CD4-positive, alpha-beta T cell (primary cell): ENCODE measurements at regions of chr12 and their contacts with region 1.

Region 1: DNA sequence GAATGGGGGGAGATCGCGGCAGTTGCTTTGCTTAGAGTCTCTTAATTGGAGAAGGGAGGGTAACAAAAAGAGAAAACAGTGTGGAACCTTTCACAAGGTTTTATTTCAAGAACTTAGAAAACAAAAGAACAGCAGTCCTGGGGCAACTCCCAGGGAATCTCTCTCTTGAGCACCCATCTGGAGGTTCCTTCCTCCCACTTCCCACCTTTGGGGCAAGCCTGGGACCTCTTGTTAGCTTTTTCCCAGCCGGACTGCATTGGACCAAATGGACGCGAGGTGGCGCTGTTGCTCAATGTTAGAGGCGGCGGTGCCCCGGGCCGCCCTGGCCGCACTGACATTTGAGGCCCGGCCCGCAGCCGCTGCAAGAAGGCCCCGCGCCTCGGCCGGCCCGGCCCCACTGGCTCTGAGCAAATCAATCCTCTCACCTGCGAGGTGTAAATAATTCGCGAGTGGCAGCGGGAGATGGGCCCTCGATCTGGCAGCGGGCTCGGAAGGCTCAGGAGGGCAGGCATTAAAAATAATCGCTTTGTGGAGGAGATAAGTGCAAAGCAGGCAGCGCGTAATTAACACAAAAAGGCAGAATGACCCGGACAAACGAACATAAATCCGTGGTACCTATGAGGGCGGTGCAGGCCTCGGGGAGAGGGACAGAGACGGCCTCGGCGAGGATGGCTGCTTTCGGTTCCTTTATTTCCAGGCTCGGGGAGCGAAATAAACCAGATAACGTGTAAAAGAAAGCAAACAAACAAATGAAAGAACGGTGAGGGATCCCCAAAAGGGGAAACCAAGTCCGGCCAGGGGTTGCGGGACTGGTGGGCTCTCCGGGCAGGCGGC is 2.7 kb upstream of the HOXC8 start:
- DNase-seq: peak; percentile 68 to 91 (median 81)
- ATAC-seq: peak; percentile 80
- H3K4me3 ChIP-seq: peak overlapping the region; percentile 50
- H3K4me3 Mint-ChIP-seq: peak overlapping the region; percentile 84
- H3K27ac ChIP-seq: no peak overlapping the region
- H3K27ac Mint-ChIP-seq: no peak overlapping the region
- H3K4me1 ChIP-seq: peaks cover 41% of the 10 kb centered on the region
- H3K4me1 Mint-ChIP-seq: peaks cover 38% of the 10 kb centered on the region
- H3K27me3 ChIP-seq: peaks cover 93 to 96% of the 10 kb centered on the region in 2 experiments
- H3K27me3 Mint-ChIP-seq: peaks cover 100% of the 10 kb centered on the region
- CTCF ChIP-seq: peak; percentile 93

Region 2: DNA sequence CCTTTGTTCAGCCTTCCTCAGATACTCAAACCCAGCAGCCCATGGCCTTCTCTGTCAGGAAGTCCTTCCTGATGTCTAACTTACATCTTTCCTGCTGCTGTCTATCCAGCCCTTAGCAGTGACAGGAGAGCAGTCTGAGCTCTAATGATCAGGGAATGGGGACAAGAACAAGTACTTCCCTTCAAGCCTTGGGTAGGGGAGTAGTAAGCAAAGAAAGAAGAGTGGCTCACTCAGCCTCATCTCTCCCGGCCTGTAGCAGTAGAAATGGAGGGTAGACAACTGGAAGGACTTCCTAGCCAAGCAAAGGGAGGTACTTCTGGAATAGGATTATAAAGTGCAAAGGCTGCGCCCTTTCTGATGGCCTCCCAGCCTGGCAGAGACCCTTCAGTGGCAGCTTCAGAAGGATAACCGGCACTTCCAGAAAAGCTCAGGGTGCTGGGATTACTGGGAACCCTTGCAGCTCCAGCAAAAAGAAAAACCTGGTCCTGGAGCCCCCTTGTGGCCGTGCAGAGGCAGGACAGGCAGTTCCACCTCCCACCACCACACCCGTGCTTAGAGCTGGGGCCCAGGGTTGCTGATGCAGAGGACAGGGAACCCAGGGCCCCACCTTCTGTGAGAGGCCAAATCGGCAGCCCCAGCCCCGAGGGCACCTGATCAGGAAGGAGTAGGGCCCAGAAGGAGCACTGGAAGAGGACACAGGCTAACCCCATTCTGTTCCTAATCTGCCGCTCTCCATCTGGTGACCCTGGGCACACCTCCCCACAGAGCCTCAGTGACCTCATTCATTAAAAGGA is 195.1 kb after region 1 on chr12:
- CTCF ChIA-PET with region 1: interaction called, 59 read pairs
- POLR2A ChIA-PET with region 1: interaction called, 4 read pairs
- intact Hi-C with region 1: loop called (anchors 1 to 2 kb)
- DNase-seq: peak; percentile 46 to 83 (median 57)
- ATAC-seq: peak; percentile 98
- H3K4me3 ChIP-seq: no peak overlapping the region
- H3K4me3 Mint-ChIP-seq: no peak overlapping the region
- H3K27ac ChIP-seq: no peak overlapping the region
- H3K27ac Mint-ChIP-seq: no peak overlapping the region
- H3K4me1 ChIP-seq: peaks cover 5% of the 10 kb centered on the region
- H3K4me1 Mint-ChIP-seq: no peaks in the 10 kb centered on the region
- H3K27me3 ChIP-seq: peaks cover 50 to 61% of the 10 kb centered on the region in 2 experiments
- H3K27me3 Mint-ChIP-seq: peaks cover 89% of the 10 kb centered on the region
- CTCF ChIP-seq: peak; percentile 92

Region 3: GRCh38 chr12:54207484-54208294 is 201.6 kb after region 1 on chr12:
- CTCF ChIA-PET with region 1: interaction called, 59 read pairs
- POLR2A ChIA-PET with region 1: interaction called, 8 read pairs
- intact Hi-C with region 1: loop called (anchors 1 kb)
- DNase-seq: peak; percentile 59 to 84 (median 72)
- ATAC-seq: peak; percentile 96
- H3K4me3 ChIP-seq: no peak overlapping the region
- H3K4me3 Mint-ChIP-seq: no peak overlapping the region
- H3K27ac ChIP-seq: no peak overlapping the region
- H3K27ac Mint-ChIP-seq: no peak overlapping the region
- H3K4me1 ChIP-seq: peaks cover 7% of the 10 kb centered on the region
- H3K4me1 Mint-ChIP-seq: no peaks in the 10 kb centered on the region
- H3K27me3 ChIP-seq: peaks cover 13 to 31% of the 10 kb centered on the region in 2 experiments
- H3K27me3 Mint-ChIP-seq: peaks cover 53% of the 10 kb centered on the region
- CTCF ChIP-seq: peak; percentile 92

Region 4: DNA sequence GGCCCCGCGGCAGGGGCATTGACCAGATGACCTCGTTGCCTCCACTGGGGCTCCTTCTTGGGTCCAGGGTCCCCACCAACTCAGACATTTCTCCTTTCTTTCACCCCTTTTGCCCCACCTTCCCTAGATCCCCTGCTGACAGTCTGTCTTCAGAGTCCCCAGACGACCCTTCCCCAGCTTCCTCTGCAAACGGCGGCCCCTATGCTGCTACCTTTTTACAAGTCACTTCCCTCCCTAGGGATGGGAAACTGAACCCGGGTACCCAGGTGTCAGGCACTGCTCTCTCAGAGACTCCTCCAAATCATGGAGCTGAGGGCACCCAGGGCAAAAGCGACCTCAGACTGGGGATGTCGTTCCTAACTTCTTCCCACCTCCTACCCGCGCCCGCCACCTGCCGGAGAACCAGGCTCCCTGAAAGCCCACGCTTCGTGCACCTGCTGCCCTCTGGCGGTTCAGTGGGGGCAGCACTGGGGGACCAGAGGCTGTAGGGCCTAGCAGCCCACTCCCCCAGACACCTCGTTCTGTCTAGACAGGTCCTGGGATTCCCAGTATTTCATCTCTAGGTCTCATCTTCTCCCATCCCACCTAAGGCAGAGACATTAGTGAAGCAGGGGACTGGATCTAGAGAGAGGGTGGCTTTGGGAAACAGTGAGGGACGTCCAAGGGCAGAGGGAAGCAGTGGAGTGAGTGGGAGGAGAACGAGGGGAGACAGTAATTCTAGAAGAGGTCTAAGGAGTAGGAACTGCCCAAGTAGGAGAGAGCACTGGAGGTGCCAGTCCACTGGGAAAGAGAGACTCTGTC is 373.5 kb after region 1 on chr12:
- CTCF ChIA-PET with region 1: no interaction called
- POLR2A ChIA-PET with region 1: no interaction called
- intact Hi-C with region 1: loop called in 1 of 2 experiments (anchors 5 kb)
- DNase-seq: peak; percentile 82 to 93 (median 87)
- ATAC-seq: peak; percentile 99
- H3K4me3 ChIP-seq: peak overlapping the region; percentile 34
- H3K4me3 Mint-ChIP-seq: peak overlapping the region; percentile 2
- H3K27ac ChIP-seq: no peak overlapping the region
- H3K27ac Mint-ChIP-seq: no peak overlapping the region
- H3K4me1 ChIP-seq: peaks cover 7% of the 10 kb centered on the region
- H3K4me1 Mint-ChIP-seq: peaks cover 6% of the 10 kb centered on the region
- H3K27me3 ChIP-seq: no peaks in the 10 kb centered on the region
- H3K27me3 Mint-ChIP-seq: no peaks in the 10 kb centered on the region
- CTCF ChIP-seq: peak; percentile 100